Sigmoid colon (tissue), 7 donors: ENCODE measurements at regions of chr12 and their contacts with region 1.

Region 1: GRCh38 chr12:3275171-3276041 is 198.2 kb downstream of the TSPAN9 start:
- DNase-seq: peak; percentile 84
- H3K4me3 ChIP-seq: no peak overlapping the region
- H3K27ac ChIP-seq: no peak overlapping the region
- H3K4me1 ChIP-seq: peaks cover 0 to 10% (median 0%) of the 10 kb centered on the region in 4 donors
- H3K27me3 ChIP-seq: no peaks in the 10 kb centered on the region
- CTCF ChIP-seq: peak; percentile 80 to 98 (median 88)
- EP300 ChIP-seq: no peak
- POLR2A ChIP-seq: no peak

Region 2: GRCh38 chr12:3073438-3074250 is 201.8 kb before region 1 on chr12:
- intact Hi-C with region 1: loop called (anchors 1 kb)
- DNase-seq: peak; percentile 89
- H3K4me3 ChIP-seq: no peak overlapping the region
- H3K27ac ChIP-seq: peak overlapping the region in 2 of 4 donors; percentile 15 to 41
- H3K4me1 ChIP-seq: peaks cover 0 to 42% (median 35%) of the 10 kb centered on the region in 4 donors
- H3K27me3 ChIP-seq: no peaks in the 10 kb centered on the region
- CTCF ChIP-seq: peak; percentile 78 to 96 (median 92)
- EP300 ChIP-seq: no peak
- POLR2A ChIP-seq: no peak

Region 3: GRCh38 chr12:3135522-3136461 is 139.6 kb before region 1 on chr12:
- intact Hi-C with region 1: loop called (anchors 1 kb)
- DNase-seq: no peak
- H3K4me3 ChIP-seq: no peak overlapping the region
- H3K27ac ChIP-seq: no peak overlapping the region
- H3K4me1 ChIP-seq: peaks cover 0 to 34% (median 31%) of the 10 kb centered on the region in 4 donors
- H3K27me3 ChIP-seq: no peaks in the 10 kb centered on the region
- CTCF ChIP-seq: peak; percentile 57 to 81 (median 69)
- EP300 ChIP-seq: no peak
- POLR2A ChIP-seq: no peak

Region 4: DNA sequence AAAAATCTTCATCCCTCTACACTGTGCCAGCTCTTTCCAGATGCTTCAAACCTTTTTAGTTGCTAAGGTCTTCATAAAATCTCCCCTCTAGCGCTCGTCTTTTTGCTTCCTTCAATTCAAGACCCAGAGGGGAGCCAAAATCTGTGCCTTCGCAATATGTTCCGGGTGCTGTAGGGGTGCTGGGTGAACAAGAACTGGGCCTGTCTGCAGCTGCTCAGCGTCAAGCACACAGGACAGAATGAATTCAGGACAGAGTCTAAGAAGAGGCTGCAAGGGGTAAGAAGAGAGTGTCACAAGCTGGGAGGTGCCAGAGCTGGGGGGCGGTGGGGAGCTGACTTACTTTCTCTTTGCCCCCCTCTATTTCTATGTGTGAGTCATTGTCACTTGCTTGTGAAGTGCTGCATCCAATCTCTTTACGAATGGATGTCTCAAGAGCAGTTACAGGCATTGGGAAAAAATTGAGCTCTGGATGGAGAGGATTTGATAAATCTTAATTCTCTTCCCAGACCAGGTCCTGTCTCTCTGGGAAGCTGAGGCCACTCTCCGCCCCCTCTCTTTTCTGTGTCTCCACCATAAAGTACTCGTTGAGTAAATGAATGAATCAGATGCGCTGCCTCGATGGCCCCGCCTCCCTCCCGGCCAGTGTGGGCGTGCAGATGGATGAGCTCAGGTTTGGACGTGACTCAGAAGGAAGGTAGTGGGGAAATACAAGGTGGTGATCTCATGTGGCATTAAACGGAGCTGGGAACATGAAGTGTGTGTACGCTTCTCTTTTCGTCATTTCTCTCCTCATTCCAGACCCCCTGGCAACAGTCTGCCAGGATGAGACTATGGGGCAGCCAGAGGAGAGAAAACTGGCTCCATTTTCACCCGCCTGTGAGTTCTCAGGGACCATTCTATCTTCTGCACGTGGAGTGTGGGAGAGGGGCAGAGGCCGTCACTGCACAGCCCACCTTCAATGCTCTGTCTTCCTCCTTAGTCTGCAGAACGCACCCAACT is 106.9 kb before region 1 on chr12:
- intact Hi-C with region 1: no loop called
- DNase-seq: no peak
- H3K4me3 ChIP-seq: no peak overlapping the region
- H3K27ac ChIP-seq: no peak overlapping the region
- H3K4me1 ChIP-seq: peaks cover 0 to 15% (median 6%) of the 10 kb centered on the region in 4 donors
- H3K27me3 ChIP-seq: no peaks in the 10 kb centered on the region
- CTCF ChIP-seq: no peak
- EP300 ChIP-seq: no peak
- POLR2A ChIP-seq: no peak

Region 5: GRCh38 chr12:3202734-3203446 is 72.5 kb before region 1 on chr12:
- intact Hi-C with region 1: loop called (anchors 5 kb)
- DNase-seq: no peak
- H3K4me3 ChIP-seq: no peak overlapping the region
- H3K27ac ChIP-seq: no peak overlapping the region
- H3K4me1 ChIP-seq: peaks cover 0 to 46% (median 30%) of the 10 kb centered on the region in 4 donors
- H3K27me3 ChIP-seq: peaks cover 0 to 16% (median 0%) of the 10 kb centered on the region in 3 donors
- CTCF ChIP-seq: peak; percentile 83 to 97 (median 88)
- EP300 ChIP-seq: no peak
- POLR2A ChIP-seq: no peak

Region 6: DNA sequence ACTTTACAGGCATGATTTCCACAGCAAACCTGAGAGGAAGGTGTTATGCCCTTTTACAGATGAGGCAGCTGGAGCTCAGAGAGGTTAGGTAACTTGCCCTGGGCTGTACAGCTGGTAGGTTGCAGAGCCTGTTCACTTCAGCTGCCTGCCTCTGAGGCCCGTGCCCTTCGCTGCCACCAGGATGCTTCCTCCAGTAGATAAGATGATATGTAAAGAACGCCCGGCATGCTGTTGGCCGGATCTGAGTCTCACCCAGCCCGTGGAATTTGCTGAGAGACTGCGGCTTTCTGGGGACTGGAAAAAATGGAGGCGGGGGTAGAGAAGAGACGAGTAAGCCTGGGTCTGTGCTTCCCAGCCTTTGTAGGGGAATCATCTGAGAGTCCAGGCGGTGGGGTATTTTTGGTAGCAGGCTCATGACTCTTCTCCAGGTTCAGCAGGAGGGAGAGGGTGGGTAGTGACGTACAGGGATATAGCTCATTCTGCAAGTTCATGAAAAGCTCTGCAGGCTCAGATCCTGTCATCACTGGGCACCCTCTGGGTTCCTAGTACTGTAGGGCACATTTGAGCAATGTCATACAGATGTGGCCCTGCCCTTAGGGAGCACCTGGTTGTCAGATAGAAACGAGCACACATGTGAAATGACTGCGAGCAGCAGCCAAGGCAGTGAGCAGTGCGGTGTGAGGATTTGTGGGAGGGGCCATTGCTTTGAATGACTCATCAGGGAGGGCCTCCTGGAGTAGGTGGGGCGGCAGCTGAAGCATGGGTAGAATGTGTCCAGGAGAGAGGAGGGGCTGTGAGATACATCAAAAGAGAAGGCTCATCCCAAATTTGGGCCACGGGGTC is 38.8 kb before region 1 on chr12:
- intact Hi-C with region 1: no loop called
- DNase-seq: no peak
- H3K4me3 ChIP-seq: no peak overlapping the region
- H3K27ac ChIP-seq: no peak overlapping the region
- H3K4me1 ChIP-seq: peaks cover 0 to 29% (median 13%) of the 10 kb centered on the region in 4 donors
- H3K27me3 ChIP-seq: no peaks in the 10 kb centered on the region
- CTCF ChIP-seq: no peak
- EP300 ChIP-seq: no peak
- POLR2A ChIP-seq: no peak